ENCODE measurements at regions of chr10 and their contacts with region 1.

Region 1: DNA sequence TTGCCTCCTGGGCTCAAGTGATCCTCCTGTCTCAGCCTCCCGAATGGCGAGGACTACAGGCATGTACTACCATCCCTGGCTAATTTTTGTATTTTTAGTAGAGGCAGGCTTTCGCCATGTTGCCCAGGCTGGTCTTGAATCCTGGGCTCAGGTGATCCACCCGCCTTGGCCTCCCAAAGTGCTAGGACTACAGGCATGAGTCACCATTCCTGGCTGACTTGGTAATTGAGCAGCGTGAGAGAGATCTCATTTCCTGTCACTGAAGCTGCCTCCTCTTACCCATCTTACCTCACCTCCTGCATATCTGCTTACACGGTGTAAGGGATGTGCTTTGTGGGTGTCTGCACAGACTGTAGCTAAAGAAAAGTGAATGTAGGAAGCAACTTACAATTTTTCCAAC is 9.7 kb downstream of the IFIT3 start:
- DNase-seq: no peak
- ATAC-seq: peak; percentile 76 to 95 (median 86)
- H3K4me3 ChIP-seq: no peak overlapping the region
- H3K27ac ChIP-seq: peak overlapping the region; percentile 32
- H3K4me1 ChIP-seq: peaks cover 36% of the 10 kb centered on the region
- H3K27me3 ChIP-seq: no peaks in the 10 kb centered on the region
- CTCF ChIP-seq: no peak

Region 2: GRCh38 chr10:89185658-89186057 is 151.8 kb before region 1 on chr10:
- intact Hi-C with region 1: no loop called
- DNase-seq: no peak
- ATAC-seq: no peak
- H3K4me3 ChIP-seq: no peak overlapping the region
- H3K27ac ChIP-seq: no peak overlapping the region
- H3K4me1 ChIP-seq: no peaks in the 10 kb centered on the region
- H3K27me3 ChIP-seq: no peaks in the 10 kb centered on the region
- CTCF ChIP-seq: no peak

Region 3: GRCh38 chr10:89369156-89370105 is 31.9 kb after region 1 on chr10:
- intact Hi-C with region 1: loop called in 1 of 2 experiments (anchors 5 kb)
- DNase-seq: no peak
- ATAC-seq: peak in 3 of 4 donors; percentile 34 to 50 (median 47)
- H3K4me3 ChIP-seq: no peak overlapping the region
- H3K27ac ChIP-seq: no peak overlapping the region
- H3K4me1 ChIP-seq: peaks cover 13% of the 10 kb centered on the region
- H3K27me3 ChIP-seq: no peaks in the 10 kb centered on the region
- CTCF ChIP-seq: peak; percentile 46

Measured in psoas muscle (tissue), 8 donors.